PC-9 (cell line): ENCODE measurements at regions of chr2 and their contacts with region 1.

Region 1: DNA sequence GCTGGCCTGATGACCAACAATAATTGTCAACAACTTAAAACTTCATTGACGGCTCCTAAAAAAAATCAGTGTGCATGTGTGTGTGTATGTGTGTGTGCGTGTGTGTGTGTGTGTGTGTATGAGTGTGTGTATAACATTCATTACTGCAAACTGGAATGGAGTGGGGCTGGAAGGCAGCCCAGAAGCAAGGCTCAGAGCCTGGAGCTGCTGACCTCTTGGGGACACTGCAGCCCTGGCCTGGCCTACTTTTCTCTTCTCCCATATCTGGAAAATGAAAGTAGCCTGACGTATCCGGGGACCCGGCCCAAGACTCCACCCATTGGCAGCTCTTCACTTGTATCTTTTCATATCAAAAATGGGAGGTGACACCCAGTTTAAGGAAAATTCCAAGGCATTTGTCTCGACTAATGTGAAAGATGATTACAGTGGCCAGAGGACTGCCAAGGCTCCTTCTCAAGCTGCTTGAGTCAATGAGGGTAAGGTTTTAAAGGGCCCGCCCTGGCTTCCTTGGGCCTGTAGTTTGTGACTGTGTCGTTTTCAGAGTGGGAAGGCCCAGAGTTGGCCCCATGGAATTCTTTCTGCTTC is 72.4 kb upstream of the IL1R1 start:
- DNase-seq: peak in 1 of 2 experiments; percentile 77
- H3K4me3 ChIP-seq: no peak overlapping the region
- H3K27ac ChIP-seq: no peak overlapping the region
- H3K4me1 ChIP-seq: peaks cover 15% of the 10 kb centered on the region
- H3K27me3 ChIP-seq: no peaks in the 10 kb centered on the region
- CTCF ChIP-seq: no peak

Region 2: GRCh38 chr2:101899871-101900270 is 170.3 kb before region 1 on chr2:
- CTCF ChIA-PET with region 1: interaction called, 11 read pairs
- POLR2A ChIA-PET with region 1: no interaction called
- intact Hi-C with region 1: no loop called
- DNase-seq: peak in 1 of 2 experiments; percentile 49
- H3K4me3 ChIP-seq: no peak overlapping the region
- H3K27ac ChIP-seq: no peak overlapping the region
- H3K4me1 ChIP-seq: peaks cover 12% of the 10 kb centered on the region
- H3K27me3 ChIP-seq: no peaks in the 10 kb centered on the region
- CTCF ChIP-seq: no peak

Region 3: GRCh38 chr2:102027036-102027980 is 42.8 kb before region 1 on chr2:
- CTCF ChIA-PET with region 1: no interaction called
- POLR2A ChIA-PET with region 1: interaction called, 14 read pairs
- intact Hi-C with region 1: loop called (anchors 5 kb)
- DNase-seq: no peak
- H3K4me3 ChIP-seq: no peak overlapping the region
- H3K27ac ChIP-seq: no peak overlapping the region
- H3K4me1 ChIP-seq: 0 out of 2 replicates have a peak, but pooled peaks cover 3% of the 10 kb centered on the region
- H3K27me3 ChIP-seq: no peaks in the 10 kb centered on the region
- CTCF ChIP-seq: no peak

Region 4: GRCh38 chr2:102033031-102033749 is 37.0 kb before region 1 on chr2:
- CTCF ChIA-PET with region 1: no interaction called
- POLR2A ChIA-PET with region 1: no interaction called
- intact Hi-C with region 1: loop called (anchors 5 kb)
- DNase-seq: peak; percentile 67 to 77
- H3K4me3 ChIP-seq: no peak overlapping the region
- H3K27ac ChIP-seq: no peak overlapping the region
- H3K4me1 ChIP-seq: peaks cover 23% of the 10 kb centered on the region
- H3K27me3 ChIP-seq: no peaks in the 10 kb centered on the region
- CTCF ChIP-seq: no peak

Region 5: GRCh38 chr2:102083393-102083703 is 13.2 kb after region 1 on chr2:
- CTCF ChIA-PET with region 1: interaction called, 11 read pairs
- POLR2A ChIA-PET with region 1: interaction called, 3 read pairs
- intact Hi-C with region 1: no loop called
- DNase-seq: no peak
- H3K4me3 ChIP-seq: no peak overlapping the region
- H3K27ac ChIP-seq: peak overlapping the region; percentile 43; the same call in 1 of the 2 replicates
- H3K4me1 ChIP-seq: peaks cover 21% of the 10 kb centered on the region
- H3K27me3 ChIP-seq: no peaks in the 10 kb centered on the region
- CTCF ChIP-seq: no peak

Region 6: DNA sequence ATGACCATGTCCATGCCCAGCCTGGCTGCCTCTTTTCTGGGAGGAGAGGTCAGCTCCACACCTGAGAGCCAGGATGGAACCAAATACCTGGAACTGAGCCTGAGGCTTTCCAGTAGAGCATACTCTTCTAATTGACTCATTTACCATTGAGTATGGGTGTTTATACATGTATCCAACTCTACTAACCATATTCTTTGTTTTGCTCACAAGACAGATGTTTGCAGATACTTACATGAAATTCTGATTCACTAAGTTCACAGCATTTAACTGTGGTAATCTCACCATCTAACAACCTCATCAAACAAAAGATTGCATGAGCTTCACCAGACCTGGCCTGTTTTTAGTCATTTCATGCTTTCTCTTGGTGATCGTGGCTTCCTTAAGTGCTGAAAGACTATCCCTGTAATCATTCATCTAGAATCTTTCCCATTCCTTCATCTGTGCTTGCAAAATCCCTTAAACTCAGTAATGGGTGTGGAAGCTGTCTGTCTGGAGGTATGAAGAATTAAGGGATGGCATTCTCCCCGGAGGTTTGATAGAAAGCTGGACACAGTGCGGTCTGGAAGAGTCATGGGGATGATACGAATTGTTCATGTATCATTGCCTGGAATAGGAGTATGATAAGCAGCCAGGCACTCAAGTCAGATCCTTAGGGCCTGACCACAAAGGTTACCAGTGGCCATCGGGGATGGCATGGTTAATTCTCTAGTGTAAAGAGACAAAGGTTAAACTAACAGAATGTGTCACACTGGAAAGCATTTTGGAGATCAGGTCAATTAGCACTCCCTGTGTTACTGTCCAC is 30.3 kb after region 1 on chr2:
- CTCF ChIA-PET with region 1: no interaction called
- POLR2A ChIA-PET with region 1: no interaction called
- intact Hi-C with region 1: loop called (anchors 2 kb)
- DNase-seq: peak; percentile 24 to 97
- H3K4me3 ChIP-seq: no peak overlapping the region
- H3K27ac ChIP-seq: peak overlapping the region; percentile 84
- H3K4me1 ChIP-seq: peaks cover 45% of the 10 kb centered on the region
- H3K27me3 ChIP-seq: no peaks in the 10 kb centered on the region
- CTCF ChIP-seq: no peak